Sciatic nerve (tissue), 2 donors: ENCODE measurements at regions of chr1 and their contacts with region 1.

Region 1: GRCh38 chr1:175665616-175666015 is 77.8 kb downstream of the TNR start:
- DNase-seq: no peak
- ATAC-seq: no peak

Region 2: DNA sequence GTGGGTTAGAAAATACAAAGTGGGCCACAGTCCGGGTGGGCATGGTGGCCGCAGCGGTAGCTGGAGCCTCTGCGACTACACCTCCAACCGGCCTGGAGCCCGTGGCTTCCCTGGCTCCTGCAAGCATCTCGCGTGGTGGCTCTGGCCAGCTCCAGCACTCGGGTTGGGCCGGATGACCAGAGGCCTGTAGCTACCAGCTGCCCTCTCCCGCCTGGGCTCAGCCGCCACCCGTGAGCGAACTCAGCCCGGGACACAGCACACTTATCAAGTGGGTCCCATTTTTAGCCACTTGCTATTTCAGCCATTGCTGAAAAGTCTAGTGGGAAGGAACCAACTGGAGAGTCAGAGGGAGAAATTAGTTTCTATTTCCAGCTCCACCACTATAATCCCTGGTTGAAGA is 773.6 kb before region 1 on chr1:
- intact Hi-C with region 1: no loop called
- DNase-seq: no peak
- ATAC-seq: no peak

Region 3: DNA sequence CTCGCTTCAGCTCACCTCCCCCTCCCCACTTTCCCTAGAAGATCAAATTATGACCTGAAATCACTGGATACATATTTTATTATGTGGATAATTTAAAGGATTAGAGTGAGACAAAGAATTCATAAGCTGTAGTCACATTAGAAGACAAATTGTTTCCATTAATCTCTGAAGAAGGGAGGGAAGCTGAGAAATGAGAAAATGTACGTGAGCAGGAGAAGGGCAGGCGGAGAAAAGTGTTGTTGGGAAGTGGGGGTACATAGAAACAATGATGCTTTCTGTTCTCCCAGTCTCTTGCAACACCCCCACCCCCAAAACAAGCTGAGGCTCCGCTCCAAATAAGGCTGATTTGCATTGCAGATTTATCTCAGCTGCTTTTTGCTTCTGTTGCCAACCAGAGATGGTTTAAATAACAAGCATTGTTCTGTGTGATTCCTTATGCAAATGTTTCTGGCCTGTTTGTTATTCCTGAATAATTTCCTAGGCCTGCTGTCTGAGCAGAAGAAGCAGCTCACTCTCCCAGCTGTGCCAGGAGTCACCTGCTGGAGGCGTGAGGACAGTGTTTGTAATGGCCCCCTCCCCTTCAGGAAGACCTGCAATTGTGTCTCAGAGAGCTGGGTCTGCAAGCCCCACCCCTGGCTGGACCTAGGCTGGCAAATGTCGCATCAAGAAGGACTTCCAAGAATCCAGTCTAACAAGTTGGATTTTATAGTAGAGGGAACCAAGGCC is 199.6 kb after region 1 on chr1:
- intact Hi-C with region 1: no loop called
- DNase-seq: no peak
- ATAC-seq: peak; percentile 54

Region 4: GRCh38 chr1:177524316-177524715 is 1858.7 kb after region 1 on chr1:
- intact Hi-C with region 1: loop called (anchors 5 kb)
- DNase-seq: no peak
- ATAC-seq: no peak